Sigmoid colon (tissue), 7 donors: ENCODE measurements at regions of chr19 and their contacts with region 1.

Region 1: GRCh38 chr19:13060964-13061927 is 41.4 kb downstream of the LYL1 start:
- DNase-seq: peak; percentile 92
- H3K4me3 ChIP-seq: peak overlapping the region; percentile 2 to 44 (median 38)
- H3K27ac ChIP-seq: peak overlapping the region; percentile 95 to 99 (median 97)
- H3K4me1 ChIP-seq: peaks cover 0 to 100% (median 100%) of the 10 kb centered on the region in 4 donors
- H3K27me3 ChIP-seq: no peaks in the 10 kb centered on the region
- CTCF ChIP-seq: peak; percentile 93 to 97 (median 94)
- EP300 ChIP-seq: no peak
- POLR2A ChIP-seq: no peak

Region 2: GRCh38 chr19:12983542-12984142 is 77.6 kb before region 1 on chr19:
- intact Hi-C with region 1: loop called (anchors 1 kb)
- DNase-seq: peak; percentile 91
- H3K4me3 ChIP-seq: peak overlapping the region in 3 of 4 donors; percentile 32 to 38 (median 38)
- H3K27ac ChIP-seq: peak overlapping the region in 2 of 4 donors; percentile 37 to 51
- H3K4me1 ChIP-seq: peaks cover 0 to 9% (median 7%) of the 10 kb centered on the region in 4 donors
- H3K27me3 ChIP-seq: no peaks in the 10 kb centered on the region
- CTCF ChIP-seq: peak; percentile 89 to 96 (median 94)
- EP300 ChIP-seq: no peak
- POLR2A ChIP-seq: no peak

Region 3: GRCh38 chr19:12994701-12995595 is 66.3 kb before region 1 on chr19 and contains the start of gene NFIX:
- intact Hi-C with region 1: loop called (anchors 2 kb)
- DNase-seq: peak; percentile 86
- H3K4me3 ChIP-seq: peak within 1 kb of the TSS; percentile 86 to 97 (median 90)
- H3K27ac ChIP-seq: peak within 1 kb of the TSS; percentile 92 to 98 (median 98)
- H3K4me1 ChIP-seq: peaks cover 0 to 39% (median 35%) of the 10 kb centered on the region in 4 donors
- H3K27me3 ChIP-seq: no peaks in the 10 kb centered on the region
- CTCF ChIP-seq: no peak
- EP300 ChIP-seq: no peak
- POLR2A ChIP-seq: no peak
- total RNA-seq, gene NFIX: 44.1 to 104 (median 58.5) TPM

Region 4: DNA sequence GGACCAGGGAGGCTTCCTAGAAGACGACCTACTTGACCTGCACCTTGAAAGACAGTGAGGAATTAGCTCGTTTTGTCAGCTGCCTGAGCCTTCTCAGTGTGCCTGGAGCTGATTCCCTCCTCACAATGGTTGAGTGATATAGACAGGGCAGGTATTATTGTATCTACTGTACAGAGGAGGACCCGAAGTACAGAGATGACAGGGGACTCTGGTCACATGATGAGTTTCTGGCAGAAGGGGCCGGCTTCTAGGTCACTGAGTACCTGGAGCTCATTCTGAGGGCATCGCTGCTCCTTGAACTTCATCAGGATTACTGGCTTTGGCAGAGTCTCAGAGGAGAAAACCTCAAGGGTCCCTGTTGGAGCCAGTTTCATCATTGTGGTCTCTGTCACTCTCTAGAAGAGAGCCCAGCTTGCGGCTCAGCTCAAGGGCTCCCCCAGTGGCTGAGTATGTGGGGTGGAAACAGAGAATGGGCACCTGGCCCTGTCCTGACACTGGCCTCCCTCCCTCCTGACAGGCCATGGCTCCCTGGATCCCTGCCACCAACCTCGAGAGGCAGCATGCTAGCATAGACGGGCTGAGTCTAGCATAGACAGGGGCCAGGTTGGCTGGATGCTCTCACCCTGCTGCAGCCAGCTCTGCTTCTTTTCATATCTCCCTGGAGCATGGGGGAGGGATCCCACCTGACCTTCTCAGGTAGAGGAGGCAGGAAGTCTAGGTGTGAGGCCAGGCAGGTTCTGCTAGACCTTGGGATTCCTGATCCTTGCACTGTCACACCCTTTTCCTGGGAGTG is 27.2 kb before region 1 on chr19:
- intact Hi-C with region 1: loop called (anchors 2 kb)
- DNase-seq: peak; percentile 96
- H3K4me3 ChIP-seq: no peak overlapping the region
- H3K27ac ChIP-seq: peak overlapping the region; percentile 84 to 98 (median 95)
- H3K4me1 ChIP-seq: peaks cover 0 to 100% (median 100%) of the 10 kb centered on the region in 4 donors
- H3K27me3 ChIP-seq: no peaks in the 10 kb centered on the region
- CTCF ChIP-seq: peak; percentile 76 to 86 (median 84)
- EP300 ChIP-seq: no peak
- POLR2A ChIP-seq: no peak

Region 5: GRCh38 chr19:13093407-13094105 is 32.3 kb after region 1 on chr19:
- intact Hi-C with region 1: loop called (anchors 1 kb)
- DNase-seq: peak; percentile 95
- H3K4me3 ChIP-seq: no peak overlapping the region
- H3K27ac ChIP-seq: peak overlapping the region; percentile 81 to 95 (median 86)
- H3K4me1 ChIP-seq: peaks cover 0 to 95% (median 84%) of the 10 kb centered on the region in 4 donors
- H3K27me3 ChIP-seq: no peaks in the 10 kb centered on the region
- CTCF ChIP-seq: peak; percentile 89 to 96 (median 94)
- EP300 ChIP-seq: no peak
- POLR2A ChIP-seq: no peak